GM10248 (cell line): ENCODE measurements at regions of chr15 and their contacts with region 1.

Region 1: GRCh38 chr15:40217159-40217824 is 21.6 kb upstream of the PAK6 start:
- DNase-seq: peak; percentile 64
- CTCF ChIP-seq: peak; percentile 67

Region 2: DNA sequence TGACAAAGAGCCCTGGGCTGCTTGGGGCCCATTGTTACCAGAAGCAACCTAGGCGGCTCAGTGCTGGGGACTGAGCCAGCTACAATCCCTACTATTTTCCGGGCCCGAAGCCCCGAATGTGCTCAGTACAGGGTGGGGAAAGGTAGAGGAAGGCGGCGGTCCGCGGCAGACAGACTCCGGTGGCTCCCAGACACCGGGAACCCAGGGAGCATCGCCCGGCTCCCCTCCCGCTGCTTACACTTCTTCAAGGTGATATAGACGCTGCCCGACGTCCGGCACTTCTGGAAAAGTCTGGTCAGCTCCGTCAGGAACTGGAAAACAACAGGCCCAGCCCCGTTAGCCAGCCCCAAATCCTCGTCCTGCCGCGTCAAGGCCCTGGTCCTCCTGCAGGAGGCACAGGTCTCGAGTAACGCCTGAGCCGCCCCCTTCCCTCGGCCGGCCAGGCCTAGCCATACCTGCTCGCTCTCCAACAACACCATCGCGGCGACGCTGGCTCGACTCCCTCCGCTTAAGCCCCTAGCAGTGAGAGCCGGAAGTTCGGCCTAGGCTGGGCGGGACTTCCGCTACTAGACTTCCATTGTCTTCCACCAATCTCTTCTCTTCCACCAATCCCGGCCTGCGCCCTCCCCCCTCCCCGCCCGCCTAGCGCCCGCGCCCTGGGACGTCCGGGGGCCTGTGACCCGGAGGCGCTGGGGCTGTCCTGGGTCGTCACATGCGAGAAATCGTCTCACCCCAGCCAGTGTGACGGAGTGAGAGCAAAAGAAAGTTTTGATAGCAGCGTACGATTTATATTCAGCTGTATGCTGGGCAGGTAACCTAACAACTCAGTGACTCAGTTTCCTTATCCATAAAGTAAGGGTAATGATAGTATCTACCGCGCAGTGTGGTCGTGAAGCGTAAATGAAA is 178.4 kb before region 1 on chr15 and contains the start of gene SRP14:
- CTCF ChIA-PET with region 1: interaction called, 12 read pairs
- POLR2A ChIA-PET with region 1: no interaction called
- DNase-seq: peak; percentile 94
- CTCF ChIP-seq: no peak

Region 3: DNA sequence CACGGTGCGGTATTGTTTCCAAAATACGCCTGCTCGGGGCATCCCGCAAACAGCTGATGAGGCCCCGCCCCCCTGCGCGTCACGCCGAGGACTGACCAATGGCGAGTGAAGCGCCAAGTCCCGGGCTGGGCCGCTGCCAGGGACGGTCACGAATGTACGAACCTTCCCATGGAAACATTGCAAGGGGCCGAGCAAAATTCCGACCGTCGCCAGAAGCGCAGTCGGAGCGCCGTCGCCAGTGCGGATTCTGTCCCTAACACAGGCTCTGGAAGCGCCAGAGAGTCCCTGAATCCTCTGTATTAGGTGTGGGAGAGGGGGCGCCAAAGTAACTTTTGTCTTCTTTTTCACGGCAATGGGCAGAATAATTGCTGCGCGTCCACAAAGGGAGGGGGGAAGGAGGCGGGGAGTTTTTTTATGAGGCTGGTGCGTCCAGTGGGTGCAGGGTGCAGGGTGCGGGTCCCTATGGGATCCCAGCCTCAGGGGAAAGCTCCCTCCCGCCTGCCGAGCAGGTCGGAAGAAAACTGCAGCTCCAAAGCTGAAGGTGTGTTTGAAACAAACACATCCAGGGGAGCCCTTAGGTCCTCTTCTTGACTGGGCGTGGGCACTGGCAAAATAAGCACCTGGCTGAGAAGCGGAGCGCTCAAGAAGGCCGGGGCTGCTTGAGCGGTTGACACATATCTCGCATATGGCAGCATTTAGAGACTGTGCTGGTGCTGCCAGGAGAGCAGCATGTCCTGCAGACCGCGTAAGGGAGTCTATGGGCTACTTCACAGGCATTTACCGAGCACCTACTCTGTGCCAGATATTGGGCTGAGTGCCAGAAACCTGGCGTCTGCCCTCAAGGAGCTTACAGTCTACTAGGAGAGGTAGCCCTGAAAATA is 108.2 kb before region 1 on chr15 and contains the start of gene BMF:
- CTCF ChIA-PET with region 1: interaction called, 12 read pairs
- POLR2A ChIA-PET with region 1: no interaction called
- DNase-seq: peak; percentile 95
- CTCF ChIP-seq: no peak

Region 4: DNA sequence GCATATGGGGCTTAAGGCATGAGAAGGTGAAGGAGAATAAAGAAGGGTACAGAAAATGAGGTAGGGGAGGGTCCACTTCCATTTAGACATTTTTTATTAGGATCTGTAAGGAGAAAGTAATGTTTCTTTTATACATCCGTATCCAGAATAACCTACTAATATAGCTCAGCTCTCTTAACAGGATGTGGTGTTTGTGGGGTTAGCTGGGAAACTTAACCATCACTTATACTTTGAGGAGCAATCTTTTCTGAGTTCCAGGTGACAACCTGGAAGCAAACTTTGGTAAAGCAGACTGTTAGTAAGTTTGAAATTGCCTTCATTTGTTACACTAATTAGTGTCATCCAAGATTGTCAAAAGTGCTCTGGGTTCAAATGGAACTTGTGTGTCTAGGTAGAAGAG is 19.9 kb before region 1 on chr15:
- CTCF ChIA-PET with region 1: interaction called, 47 read pairs
- POLR2A ChIA-PET with region 1: no interaction called
- DNase-seq: no peak
- CTCF ChIP-seq: no peak

Region 5: GRCh38 chr15:40232625-40233070 is 15.4 kb after region 1 on chr15:
- CTCF ChIA-PET with region 1: interaction called, 49 read pairs
- POLR2A ChIA-PET with region 1: no interaction called
- DNase-seq: no peak
- CTCF ChIP-seq: no peak

Region 6: GRCh38 chr15:40249482-40250303 is 32.4 kb after region 1 on chr15:
- CTCF ChIA-PET with region 1: interaction called, 14 read pairs
- POLR2A ChIA-PET with region 1: no interaction called
- DNase-seq: no peak
- CTCF ChIP-seq: no peak

Region 7: DNA sequence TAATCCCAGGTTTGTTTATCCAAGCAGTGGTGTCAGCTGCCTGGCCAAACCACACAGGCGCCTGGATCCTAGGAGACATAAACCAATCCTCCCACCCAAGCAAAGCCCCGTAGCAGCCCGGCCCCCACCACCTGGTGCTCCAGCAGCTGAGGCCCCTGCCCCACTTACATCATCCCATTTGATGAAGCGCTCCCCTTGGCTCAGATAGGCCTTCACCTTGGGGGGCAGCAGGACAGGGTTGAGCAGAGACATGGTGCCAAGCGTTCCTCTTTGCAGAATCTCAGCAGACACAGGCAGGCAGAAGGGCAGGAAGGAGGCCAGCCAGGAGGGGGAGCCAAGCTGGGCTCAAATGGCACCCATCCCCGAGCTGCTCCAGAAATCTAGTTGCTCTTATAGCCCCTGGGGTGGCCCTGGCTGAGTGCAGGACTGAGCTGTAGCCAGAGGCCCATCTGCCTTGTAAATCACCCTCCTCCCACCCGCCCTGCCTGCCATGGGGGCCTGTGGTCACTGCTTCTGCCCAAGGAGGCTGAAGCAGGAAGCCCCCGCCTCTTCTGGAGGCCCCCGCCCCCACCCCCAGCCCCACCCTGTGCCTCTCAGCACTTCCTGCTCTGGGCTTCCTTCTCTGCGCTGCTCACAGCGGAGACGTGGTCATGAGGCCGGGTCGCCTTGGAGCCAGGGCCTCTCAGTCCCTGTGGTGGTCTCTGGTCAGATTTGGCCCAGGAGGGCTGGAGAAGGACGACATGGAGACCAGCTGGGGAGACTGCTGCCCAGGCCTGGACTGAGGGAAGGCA is 90.3 kb after region 1 on chr15 and contains the start of gene PLCB2:
- CTCF ChIA-PET with region 1: interaction called, 17 read pairs
- POLR2A ChIA-PET with region 1: no interaction called
- DNase-seq: peak; percentile 84
- CTCF ChIP-seq: peak; percentile 45

Region 8: GRCh38 chr15:40430271-40430805 is 213.0 kb after region 1 on chr15:
- CTCF ChIA-PET with region 1: no interaction called
- POLR2A ChIA-PET with region 1: no interaction called
- DNase-seq: no peak
- CTCF ChIP-seq: no peak